Colonic mucosa (tissue), 4 donors: ENCODE measurements at regions of chr11 and their contacts with region 1.

Region 1: DNA sequence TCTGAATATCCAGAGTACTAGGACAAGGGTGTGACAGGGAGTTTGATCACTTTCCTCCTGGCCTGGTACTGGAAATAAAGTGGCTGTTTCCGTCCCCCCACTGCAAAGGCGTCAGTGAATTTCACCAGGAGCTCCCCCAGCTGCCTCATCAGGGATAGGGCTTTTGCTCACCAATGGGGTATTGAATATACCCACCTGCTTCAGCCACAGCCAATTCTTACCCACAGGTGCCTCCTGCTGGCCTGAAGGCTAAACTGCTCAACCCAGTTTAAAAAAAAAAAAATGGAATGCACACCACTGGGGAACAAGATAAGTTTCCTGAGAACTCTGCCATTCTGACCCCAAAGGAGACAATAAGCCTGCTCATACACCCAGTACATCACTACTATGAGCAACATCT is 65.3 kb upstream of the MS4A8 start:
- DNase-seq: no peak
- H3K4me3 ChIP-seq: no peak overlapping the region
- H3K27ac ChIP-seq: no peak overlapping the region
- H3K4me1 ChIP-seq: no peaks in the 10 kb centered on the region
- H3K27me3 ChIP-seq: no peaks in the 10 kb centered on the region
- CTCF ChIP-seq: no peak

Region 2: DNA sequence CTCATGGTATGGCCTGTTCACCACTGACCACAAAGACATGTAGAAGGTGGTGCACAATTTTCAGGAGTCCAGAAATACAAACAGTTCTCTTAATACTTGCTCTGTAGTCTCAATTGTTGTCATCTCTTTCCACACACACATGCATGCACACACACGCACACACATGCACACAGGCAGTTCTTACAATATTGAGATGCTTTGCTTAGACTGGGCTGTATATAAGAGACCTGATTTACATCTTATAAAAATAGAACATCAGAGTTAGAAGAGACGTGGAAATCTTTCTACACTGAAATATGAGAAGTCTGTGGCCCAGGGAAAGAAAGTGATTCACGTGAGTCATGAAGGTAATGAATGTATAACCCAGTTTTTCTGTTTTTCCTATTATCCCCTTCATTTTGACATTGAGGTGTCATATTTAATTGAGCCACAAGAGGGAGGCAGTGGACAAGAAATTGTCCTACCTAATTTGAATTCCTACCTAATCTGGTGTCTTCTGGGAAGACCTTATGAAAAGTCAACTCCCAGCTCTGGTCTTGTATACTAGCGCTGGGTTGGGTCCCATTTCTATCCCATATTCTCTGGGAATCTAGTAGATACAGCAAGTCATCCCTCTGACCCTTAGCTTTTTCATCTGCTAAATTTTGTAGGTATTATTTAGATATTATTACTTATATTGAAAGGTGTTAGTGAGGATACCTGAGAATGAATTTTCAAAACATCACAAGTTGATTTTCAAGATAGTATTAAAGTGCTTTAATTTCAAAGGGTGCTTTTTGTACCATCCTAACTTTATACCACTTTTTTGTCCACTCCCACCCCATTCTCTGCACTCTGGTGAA is 368.5 kb before region 1 on chr11:
- intact Hi-C with region 1: loop called (anchors 10 kb)
- DNase-seq: peak; percentile 34
- H3K4me3 ChIP-seq: no peak overlapping the region
- H3K27ac ChIP-seq: no peak overlapping the region
- H3K4me1 ChIP-seq: no peaks in the 10 kb centered on the region
- H3K27me3 ChIP-seq: no peaks in the 10 kb centered on the region
- CTCF ChIP-seq: peak; percentile 49

Region 3: GRCh38 chr11:60570970-60571369 is 63.2 kb before region 1 on chr11:
- intact Hi-C with region 1: no loop called
- DNase-seq: no peak
- H3K4me3 ChIP-seq: no peak overlapping the region
- H3K27ac ChIP-seq: no peak overlapping the region
- H3K4me1 ChIP-seq: no peaks in the 10 kb centered on the region
- H3K27me3 ChIP-seq: no peaks in the 10 kb centered on the region
- CTCF ChIP-seq: no peak